ENCODE measurements at regions of chr6 and their contacts with region 1.

Region 1: GRCh38 chr6:120056085-120056484 is 706.5 kb upstream of the MAN1A1 start:
- DNase-seq: peak in 3 of 4 experiments; percentile 10 to 19 (median 16)
- ATAC-seq: 0 out of 3 replicates have a peak, but pooled peaks have one; percentile 37
- H3K4me3 ChIP-seq: no peak overlapping the region
- H3K27ac ChIP-seq: no peak overlapping the region
- H3K4me1 ChIP-seq: no peaks in the 10 kb centered on the region
- H3K27me3 ChIP-seq: no peaks in the 10 kb centered on the region
- CTCF ChIP-seq: peak; percentile 32 to 62 (median 39); a peak in 4 of 6 replicates
- EP300 ChIP-seq: no peak
- POLR2A ChIP-seq: no peak
- RAD21 ChIP-seq: peak in 1 of 2 experiments; percentile 35; a peak in 1 of 4 replicates

Region 2: GRCh38 chr6:119147101-119148053 is 908.7 kb before region 1 on chr6:
- CTCF ChIA-PET with region 1: no interaction called
- POLR2A ChIA-PET with region 1: no interaction called
- in situ Hi-C with region 1: no loop called
- intact Hi-C with region 1: loop called (anchors 10 kb)
- DNase-seq: peak; percentile 89 to 92 (median 91)
- ATAC-seq: peak; percentile 83
- H3K4me3 ChIP-seq: no peak overlapping the region
- H3K27ac ChIP-seq: peak overlapping the region; percentile 85
- H3K4me1 ChIP-seq: peaks cover 23 to 39% of the 10 kb centered on the region in 2 experiments
- H3K27me3 ChIP-seq: no peaks in the 10 kb centered on the region
- CTCF ChIP-seq: no peak
- EP300 ChIP-seq: peak; percentile 87
- POLR2A ChIP-seq: no peak
- RAD21 ChIP-seq: peak in 1 of 2 experiments; percentile 15; a peak in 1 of 4 replicates

Measured in K562 (cell line).